Cardiac septum (tissue), 1 donor: ENCODE measurements at regions of chr13 and their contacts with region 1.

Region 1: DNA sequence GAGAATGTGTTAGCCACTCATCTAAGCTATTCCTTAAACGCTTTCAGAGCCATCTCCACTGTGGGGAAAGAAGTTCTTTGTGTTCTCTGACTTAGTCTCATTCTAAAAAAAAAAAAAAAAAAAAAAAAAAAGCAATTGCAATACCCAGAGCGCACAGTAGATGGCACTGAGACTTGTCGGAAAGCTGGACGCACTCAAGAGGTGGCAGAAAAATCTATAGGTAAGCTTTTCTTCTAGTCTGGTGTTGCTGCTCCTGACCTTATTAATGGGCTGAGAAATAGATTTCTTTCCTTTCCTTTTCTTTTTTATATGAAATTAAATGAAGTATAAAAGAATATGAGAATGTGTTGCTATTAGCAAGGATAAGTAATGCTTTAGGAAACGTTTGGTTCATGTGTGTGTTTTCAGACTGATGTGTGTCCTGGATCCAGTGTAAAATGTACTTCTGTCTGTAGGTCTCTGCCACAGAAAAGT is 4.7 kb upstream of the GJB2 start:
- DNase-seq: no peak

Region 2: GRCh38 chr13:19726611-19727010 is 470.8 kb before region 1 on chr13:
- intact Hi-C with region 1: no loop called
- DNase-seq: no peak

Region 3: DNA sequence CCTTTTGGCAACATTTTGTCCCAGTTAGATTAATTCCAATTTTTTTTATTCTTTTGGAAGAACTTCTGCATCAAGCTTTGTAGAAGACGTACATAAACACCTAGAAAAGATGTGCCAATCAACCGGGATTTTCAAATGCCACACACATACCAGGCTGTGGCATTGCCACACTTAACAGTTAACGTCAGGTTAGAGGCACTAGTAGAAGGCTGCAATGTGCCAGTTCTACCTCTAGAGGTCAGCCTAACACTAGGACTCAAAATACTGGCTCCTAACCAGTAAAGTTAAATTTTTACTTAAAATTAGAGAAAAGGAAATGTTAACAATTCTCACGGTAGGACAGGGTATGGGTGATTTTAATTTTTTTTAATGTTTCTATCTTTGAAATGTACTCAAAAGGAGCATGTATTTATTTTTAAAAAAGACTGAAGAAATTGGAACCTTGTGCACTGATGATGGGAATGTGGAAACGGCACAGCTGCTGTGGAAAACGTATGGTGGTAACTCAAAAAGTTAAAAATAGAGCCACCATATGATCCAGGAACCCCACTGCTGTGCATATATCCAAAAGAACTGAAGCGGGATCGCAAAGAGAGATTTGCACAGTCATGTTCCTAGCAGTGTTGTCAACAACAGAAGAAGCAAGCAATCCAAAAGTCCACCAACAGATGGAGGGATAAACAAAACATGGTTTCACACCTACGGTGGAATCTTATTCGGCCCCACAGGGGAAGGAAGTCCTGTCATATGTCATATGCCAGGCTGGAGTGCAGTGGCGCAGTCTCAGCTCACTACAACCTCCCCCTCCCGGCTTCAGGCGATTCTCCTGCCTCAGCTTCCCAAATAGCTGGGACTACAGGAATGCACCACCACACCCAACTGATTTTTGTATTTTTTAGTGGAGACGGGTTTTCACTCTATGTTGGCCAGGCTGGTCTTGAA is 298.0 kb after region 1 on chr13:
- intact Hi-C with region 1: loop called (anchors 2 kb)
- DNase-seq: no peak